OCI-LY7 (cell line): ENCODE measurements at regions of chr1 and their contacts with region 1.

Region 1: GRCh38 chr1:203304919-203305808 is at the start of gene BTG2:
- DNase-seq: peak; percentile 91
- H3K4me3 ChIP-seq: peak within 1 kb of the TSS; percentile 96
- H3K27ac ChIP-seq: peak within 1 kb of the TSS; percentile 98
- H3K4me1 ChIP-seq: peaks cover 66% of the 10 kb centered on the region
- CTCF ChIP-seq: no peak
- total RNA-seq, gene BTG2: 146 and 156 TPM in 2 replicates

Region 2: GRCh38 chr1:203264052-203264501 is 41.1 kb before region 1 on chr1:
- CTCF ChIA-PET with region 1: no interaction called
- POLR2A ChIA-PET with region 1: no interaction called
- intact Hi-C with region 1: no loop called
- DNase-seq: no peak
- H3K4me3 ChIP-seq: no peak overlapping the region
- H3K27ac ChIP-seq: no peak overlapping the region
- H3K4me1 ChIP-seq: peaks cover 49% of the 10 kb centered on the region
- CTCF ChIP-seq: no peak

Region 3: GRCh38 chr1:203290261-203291089 is 14.7 kb before region 1 on chr1:
- CTCF ChIA-PET with region 1: interaction called, 6 read pairs
- POLR2A ChIA-PET with region 1: interaction called, 241 read pairs
- intact Hi-C with region 1: loop called (anchors 1 kb)
- DNase-seq: peak; percentile 96
- H3K4me3 ChIP-seq: peak overlapping the region; percentile 63
- H3K27ac ChIP-seq: peak overlapping the region; percentile 99
- H3K4me1 ChIP-seq: peaks cover 99% of the 10 kb centered on the region
- CTCF ChIP-seq: 0 out of 2 replicates have a peak, but pooled peaks have one; percentile 17

Region 4: DNA sequence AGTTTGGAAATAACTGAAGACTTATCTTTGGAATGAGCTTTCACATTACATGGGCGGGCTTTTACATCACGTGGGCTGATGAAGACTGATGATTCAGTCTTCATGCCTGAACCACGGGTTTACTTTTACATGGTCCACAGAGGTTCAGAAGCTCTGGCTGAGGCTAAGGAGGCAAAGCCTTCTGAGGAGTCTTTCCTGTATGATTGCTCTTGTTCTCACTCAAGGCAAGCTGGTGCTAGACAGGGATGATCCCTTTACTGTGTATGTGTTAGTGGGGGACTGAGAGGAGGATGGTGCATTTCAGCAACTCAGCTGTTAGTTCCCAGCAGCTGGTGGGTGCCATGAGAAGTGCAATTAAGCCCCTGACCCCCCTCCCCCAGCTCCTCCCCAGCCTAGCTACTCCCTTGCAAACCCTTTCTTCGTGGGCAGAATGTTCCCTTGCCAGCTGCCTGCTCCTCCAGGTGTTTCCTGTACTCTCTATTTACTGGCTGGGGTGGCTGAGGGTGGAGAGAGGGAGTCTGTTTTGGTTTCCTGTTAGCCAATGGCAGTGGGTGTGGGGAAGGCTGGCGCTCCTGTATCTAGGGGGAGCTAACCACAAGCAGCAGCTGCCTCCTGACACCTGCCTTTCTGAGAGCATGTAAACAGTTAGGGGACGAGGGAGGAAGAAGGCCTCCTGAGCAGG is 15.6 kb after region 1 on chr1:
- CTCF ChIA-PET with region 1: interaction called, 23 read pairs
- POLR2A ChIA-PET with region 1: interaction called, 309 read pairs
- intact Hi-C with region 1: loop called (anchors 1 kb)
- DNase-seq: peak; percentile 99
- H3K4me3 ChIP-seq: peak overlapping the region; percentile 54
- H3K27ac ChIP-seq: peak overlapping the region; percentile 98
- H3K4me1 ChIP-seq: peaks cover 95% of the 10 kb centered on the region
- CTCF ChIP-seq: peak; percentile 41; the same call in 1 of the 2 replicates

Region 5: GRCh38 chr1:203326830-203327683 is 21.9 kb after region 1 on chr1:
- CTCF ChIA-PET with region 1: interaction called, 19 read pairs
- POLR2A ChIA-PET with region 1: interaction called, 309 read pairs
- intact Hi-C with region 1: loop called (anchors 1 kb)
- DNase-seq: peak; percentile 96
- H3K4me3 ChIP-seq: peak overlapping the region; percentile 67
- H3K27ac ChIP-seq: peak overlapping the region; percentile 98
- H3K4me1 ChIP-seq: peaks cover 90% of the 10 kb centered on the region
- CTCF ChIP-seq: no peak